Mucosa of descending colon (tissue), 3 donors: ENCODE measurements at regions of chr4 and their contacts with region 1.

Region 1: DNA sequence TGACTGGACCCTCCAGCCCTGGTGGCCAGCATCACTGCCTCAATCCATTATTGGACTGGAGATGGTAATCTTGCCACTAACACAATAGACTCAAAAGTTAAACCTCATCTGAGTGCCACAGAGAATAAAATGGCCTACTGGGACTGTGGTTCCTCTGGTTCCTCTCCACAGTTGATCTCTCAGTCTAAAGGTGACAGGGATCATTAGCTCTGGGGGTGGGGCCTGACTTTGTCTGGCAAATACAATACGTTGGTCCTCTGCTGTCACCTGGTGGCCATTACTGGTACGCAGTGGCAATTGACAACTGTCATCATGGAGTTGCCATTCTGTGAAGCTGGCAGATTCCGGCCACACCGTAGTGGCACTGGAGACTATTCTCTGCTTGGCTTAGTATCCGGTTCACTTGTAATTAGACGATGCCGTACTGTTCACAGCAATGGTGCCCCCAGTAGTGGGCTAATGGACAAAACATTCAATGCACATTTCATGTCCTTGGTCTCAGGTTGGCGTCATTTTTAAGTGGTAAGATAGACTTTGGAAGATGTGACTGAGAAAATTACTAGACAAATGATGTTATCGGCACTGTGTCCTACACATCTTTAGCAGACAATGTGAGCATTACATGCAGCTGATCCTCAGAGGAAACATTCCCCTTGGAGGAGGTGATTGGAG is 6.7 kb downstream of the FGFBP2 start:
- DNase-seq: peak; percentile 65 to 99 (median 87)
- ATAC-seq: peak; percentile 100
- H3K4me3 ChIP-seq: no peak overlapping the region
- H3K4me1 ChIP-seq: no peaks in the 10 kb centered on the region
- CTCF ChIP-seq: peak; percentile 78

Region 2: GRCh38 chr4:15805583-15806517 is 150.5 kb before region 1 on chr4:
- intact Hi-C with region 1: loop called (anchors 10 kb)
- DNase-seq: peak in 1 of 3 donors; percentile 71
- ATAC-seq: peak; percentile 80
- H3K4me3 ChIP-seq: no peak overlapping the region
- H3K4me1 ChIP-seq: no peaks in the 10 kb centered on the region
- CTCF ChIP-seq: peak; percentile 53

Region 3: GRCh38 chr4:15882675-15883086 is 73.6 kb before region 1 on chr4:
- intact Hi-C with region 1: loop called in 1 of 2 experiments (anchors 2 kb)
- DNase-seq: peak in 2 of 3 donors; percentile 44 to 52
- ATAC-seq: peak; percentile 93
- H3K4me3 ChIP-seq: no peak overlapping the region
- H3K4me1 ChIP-seq: peaks cover 11% of the 10 kb centered on the region
- CTCF ChIP-seq: peak; percentile 79